Left ventricle myocardium inferior (tissue), 1 donor: ENCODE measurements at regions of chr6 and their contacts with region 1.

Region 1: GRCh38 chr6:112180095-112180820 is 74.1 kb downstream of the LAMA4 start:
- DNase-seq: no peak
- H3K4me3 ChIP-seq: no peak overlapping the region
- H3K27ac ChIP-seq: peak overlapping the region; percentile 33
- H3K4me1 ChIP-seq: peaks cover 23% of the 10 kb centered on the region
- H3K27me3 ChIP-seq: no peaks in the 10 kb centered on the region
- CTCF ChIP-seq: peak; percentile 82

Region 2: GRCh38 chr6:112253841-112254816 is 73.9 kb after region 1 on chr6 and contains the start of gene LAMA4:
- intact Hi-C with region 1: loop called (anchors 10 kb)
- DNase-seq: peak; percentile 66
- H3K4me3 ChIP-seq: peak within 1 kb of the TSS; percentile 88
- H3K27ac ChIP-seq: peak within 1 kb of the TSS; percentile 98
- H3K4me1 ChIP-seq: peaks cover 76% of the 10 kb centered on the region
- H3K27me3 ChIP-seq: no peaks in the 10 kb centered on the region
- CTCF ChIP-seq: peak; percentile 15
- total RNA-seq, gene LAMA4: 103 TPM

Region 3: DNA sequence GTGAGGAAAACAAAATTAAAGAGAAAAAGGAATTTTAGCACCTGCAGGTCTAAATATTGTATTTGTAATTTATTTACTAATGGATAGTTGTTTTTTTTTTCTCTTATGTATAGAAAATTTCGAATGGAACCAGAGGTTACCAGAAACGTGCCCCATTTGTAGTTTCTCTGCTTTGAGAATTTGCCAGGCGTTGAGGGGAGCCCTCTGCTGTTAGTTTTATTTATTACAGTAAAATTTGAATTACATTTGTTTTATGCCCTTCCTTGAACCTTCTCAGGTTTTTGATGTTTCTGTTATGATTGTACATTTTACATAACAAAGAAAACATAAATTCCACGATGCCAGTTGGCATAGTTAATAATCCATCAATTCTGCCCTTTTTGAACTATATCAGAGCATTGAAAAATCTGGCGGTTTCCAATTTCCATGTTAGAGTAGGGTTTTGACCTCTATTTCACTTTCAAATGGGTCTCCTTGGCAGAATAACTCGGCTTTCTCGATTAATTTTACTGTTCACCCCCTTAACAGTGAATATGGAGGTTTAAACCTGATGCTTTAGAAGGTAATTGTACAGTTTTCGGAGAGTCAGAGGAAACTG is 131.8 kb after region 1 on chr6:
- intact Hi-C with region 1: loop called (anchors 5 kb)
- DNase-seq: no peak
- H3K4me3 ChIP-seq: no peak overlapping the region
- H3K27ac ChIP-seq: no peak overlapping the region
- H3K4me1 ChIP-seq: peaks cover 27% of the 10 kb centered on the region
- H3K27me3 ChIP-seq: no peaks in the 10 kb centered on the region
- CTCF ChIP-seq: peak; percentile 82